ENCODE measurements at regions of chr7 and their contacts with region 1.

Region 1: GRCh38 chr7:149020483-149020882 is 7.8 kb downstream of the PDIA4 start:
- DNase-seq: no peak
- ATAC-seq: no peak
- H3K4me3 ChIP-seq: no peak overlapping the region
- H3K27ac ChIP-seq: no peak overlapping the region
- H3K4me1 ChIP-seq: 0 out of 2 replicates have a peak, but pooled peaks cover under 1% of the 10 kb centered on the region
- H3K27me3 ChIP-seq: no peaks in the 10 kb centered on the region
- CTCF ChIP-seq: no peak

Region 2: GRCh38 chr7:149761307-149761706 is 740.8 kb after region 1 on chr7:
- CTCF ChIA-PET with region 1: no interaction called
- POLR2A ChIA-PET with region 1: interaction called, 11 read pairs
- in situ Hi-C with region 1: no loop called
- intact Hi-C with region 1: no loop called
- DNase-seq: no peak
- ATAC-seq: no peak
- H3K4me3 ChIP-seq: no peak overlapping the region
- H3K27ac ChIP-seq: no peak overlapping the region
- H3K4me1 ChIP-seq: no peaks in the 10 kb centered on the region
- H3K27me3 ChIP-seq: no peaks in the 10 kb centered on the region
- CTCF ChIP-seq: no peak

Measured in Panc1 (cell line).